ENCODE measurements at regions of chr9 and their contacts with region 1.

Region 1: DNA sequence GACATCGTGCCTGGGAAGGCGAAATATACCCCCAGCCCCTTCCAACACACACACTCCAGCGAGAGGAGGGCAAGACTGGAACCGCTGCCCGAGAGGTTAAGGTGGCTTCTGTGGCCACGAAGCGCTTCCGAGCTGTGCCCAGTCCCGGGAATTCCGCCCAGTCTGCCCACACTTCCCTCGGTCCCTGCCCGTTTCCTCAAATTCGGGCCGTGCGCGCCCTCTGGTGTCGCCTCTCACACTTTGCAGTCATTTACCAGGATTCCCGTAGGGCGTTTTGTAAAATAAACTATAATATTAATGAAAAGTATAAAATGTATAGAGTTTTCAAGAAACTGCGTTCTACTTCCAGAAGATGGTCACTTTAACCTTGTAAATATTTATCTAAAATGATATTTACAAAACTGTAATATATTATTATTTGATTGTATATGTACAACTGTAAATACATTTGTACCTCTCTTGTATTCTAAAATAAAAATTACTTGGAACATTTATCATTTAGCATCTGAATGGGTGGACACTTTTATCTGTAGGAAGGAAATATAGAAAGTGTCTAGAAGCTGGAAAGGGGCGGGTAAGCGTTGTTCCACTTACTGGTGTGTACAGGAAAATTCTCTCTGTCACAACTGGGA is 11.0 kb upstream of the EXOSC2 start:
- DNase-seq: peak; percentile 78 to 80
- H3K4me3 ChIP-seq: peak overlapping the region; percentile 80
- H3K4me3 Mint-ChIP-seq: peak overlapping the region; percentile 81
- H3K27ac Mint-ChIP-seq: peak overlapping the region; percentile 51
- H3K4me1 ChIP-seq: 0 out of 2 replicates have a peak, but pooled peaks cover 3% of the 10 kb centered on the region
- H3K4me1 Mint-ChIP-seq: no peaks in the 10 kb centered on the region
- H3K27me3 ChIP-seq: no peaks in the 10 kb centered on the region
- H3K27me3 Mint-ChIP-seq: peaks cover 5% of the 10 kb centered on the region
- CTCF ChIP-seq: peak; percentile 79 to 87

Region 2: GRCh38 chr9:130461218-130461630 is 221.4 kb before region 1 on chr9:
- CTCF ChIA-PET with region 1: interaction called, 21 read pairs
- POLR2A ChIA-PET with region 1: no interaction called
- intact Hi-C with region 1: loop called (anchors 1 kb)
- DNase-seq: peak in 1 of 2 experiments; percentile 77
- H3K4me3 ChIP-seq: no peak overlapping the region
- H3K4me3 Mint-ChIP-seq: no peak overlapping the region
- H3K27ac Mint-ChIP-seq: no peak overlapping the region
- H3K4me1 ChIP-seq: no peaks in the 10 kb centered on the region
- H3K4me1 Mint-ChIP-seq: no peaks in the 10 kb centered on the region
- H3K27me3 ChIP-seq: no peaks in the 10 kb centered on the region
- H3K27me3 Mint-ChIP-seq: peaks cover 3% of the 10 kb centered on the region
- CTCF ChIP-seq: peak; percentile 91 to 94

Region 3: GRCh38 chr9:130578865-130579737 is 103.5 kb before region 1 on chr9 and contains the start of gene FUBP3:
- CTCF ChIA-PET with region 1: no interaction called
- POLR2A ChIA-PET with region 1: no interaction called
- intact Hi-C with region 1: loop called (anchors 2 kb)
- DNase-seq: peak; percentile 92 to 93
- H3K4me3 ChIP-seq: peak within 1 kb of the TSS; percentile 97
- H3K4me3 Mint-ChIP-seq: peak within 1 kb of the TSS; percentile 85
- H3K27ac Mint-ChIP-seq: peak within 1 kb of the TSS; percentile 85
- H3K4me1 ChIP-seq: 0 out of 2 replicates have a peak, but pooled peaks cover 5% of the 10 kb centered on the region
- H3K4me1 Mint-ChIP-seq: peaks cover 15% of the 10 kb centered on the region
- H3K27me3 ChIP-seq: no peaks in the 10 kb centered on the region
- H3K27me3 Mint-ChIP-seq: no peaks in the 10 kb centered on the region
- CTCF ChIP-seq: no peak
- total RNA-seq, gene FUBP3: 76.1 and 78.6 TPM in 2 replicates

Region 4: GRCh38 chr9:130640681-130641080 is 41.9 kb before region 1 on chr9:
- CTCF ChIA-PET with region 1: interaction called, 6 read pairs
- POLR2A ChIA-PET with region 1: no interaction called
- intact Hi-C with region 1: loop called (anchors 5 kb)
- DNase-seq: no peak
- H3K4me3 ChIP-seq: no peak overlapping the region
- H3K4me3 Mint-ChIP-seq: no peak overlapping the region
- H3K27ac Mint-ChIP-seq: no peak overlapping the region
- H3K4me1 ChIP-seq: no peaks in the 10 kb centered on the region
- H3K4me1 Mint-ChIP-seq: no peaks in the 10 kb centered on the region
- H3K27me3 ChIP-seq: no peaks in the 10 kb centered on the region
- H3K27me3 Mint-ChIP-seq: no peaks in the 10 kb centered on the region
- CTCF ChIP-seq: no peak

Region 5: GRCh38 chr9:130693426-130694191 is 11.0 kb after region 1 on chr9 and contains the start of gene EXOSC2:
- CTCF ChIA-PET with region 1: interaction called, 13 read pairs
- POLR2A ChIA-PET with region 1: interaction called, 9 read pairs
- intact Hi-C with region 1: no loop called
- DNase-seq: peak; percentile 91 to 99
- H3K4me3 ChIP-seq: peak within 1 kb of the TSS; percentile 70
- H3K4me3 Mint-ChIP-seq: peak within 1 kb of the TSS; percentile 95
- H3K27ac Mint-ChIP-seq: peak within 1 kb of the TSS; percentile 92
- H3K4me1 ChIP-seq: peaks cover 10% of the 10 kb centered on the region
- H3K4me1 Mint-ChIP-seq: peaks cover 16% of the 10 kb centered on the region
- H3K27me3 ChIP-seq: no peaks in the 10 kb centered on the region
- H3K27me3 Mint-ChIP-seq: no peaks in the 10 kb centered on the region
- CTCF ChIP-seq: no peak
- total RNA-seq, gene EXOSC2: 59.1 and 68.4 TPM in 2 replicates

Region 6: GRCh38 chr9:130834371-130835311 is 152.0 kb after region 1 on chr9 and contains the start of gene ABL1:
- CTCF ChIA-PET with region 1: no interaction called
- POLR2A ChIA-PET with region 1: no interaction called
- intact Hi-C with region 1: no loop called
- DNase-seq: peak; percentile 80 to 82
- H3K4me3 ChIP-seq: peak within 1 kb of the TSS; percentile 79
- H3K4me3 Mint-ChIP-seq: peak within 1 kb of the TSS; percentile 93
- H3K27ac Mint-ChIP-seq: peak within 1 kb of the TSS; percentile 94
- H3K4me1 ChIP-seq: peaks cover 8% of the 10 kb centered on the region; the same call in 1 of the 2 replicates
- H3K4me1 Mint-ChIP-seq: peaks cover 16% of the 10 kb centered on the region
- H3K27me3 ChIP-seq: no peaks in the 10 kb centered on the region
- H3K27me3 Mint-ChIP-seq: no peaks in the 10 kb centered on the region
- CTCF ChIP-seq: no peak
- total RNA-seq, gene ABL1: 50.9 and 55.2 TPM in 2 replicates

Measured in Caco-2 (cell line).